ENCODE measurements at regions of chr2 and their contacts with region 1.

Region 1: DNA sequence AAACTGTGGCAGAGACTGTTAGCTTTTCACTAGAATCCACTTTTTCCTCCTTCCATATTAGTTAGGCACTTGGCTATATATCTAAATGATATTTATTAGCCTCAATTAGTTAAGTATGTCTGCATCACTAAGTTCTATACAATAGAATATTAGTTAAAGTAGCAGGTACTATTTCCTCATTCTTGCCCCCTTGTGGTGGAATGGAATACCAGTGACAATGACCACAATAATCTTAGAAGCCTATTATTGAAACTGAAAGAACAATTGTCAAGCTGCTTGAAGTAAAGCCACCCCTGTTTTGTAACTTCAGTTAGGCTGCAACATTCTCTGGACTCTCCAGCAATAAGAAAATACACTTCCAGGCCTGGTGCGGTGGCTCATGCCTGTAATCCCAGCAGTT is 476.3 kb upstream of the VWC2L start:
- H3K4me3 Mint-ChIP-seq: no peak overlapping the region
- H3K27ac Mint-ChIP-seq: no peak overlapping the region
- H3K4me1 Mint-ChIP-seq: no peaks in the 10 kb centered on the region
- H3K27me3 Mint-ChIP-seq: no peaks in the 10 kb centered on the region

Region 2: DNA sequence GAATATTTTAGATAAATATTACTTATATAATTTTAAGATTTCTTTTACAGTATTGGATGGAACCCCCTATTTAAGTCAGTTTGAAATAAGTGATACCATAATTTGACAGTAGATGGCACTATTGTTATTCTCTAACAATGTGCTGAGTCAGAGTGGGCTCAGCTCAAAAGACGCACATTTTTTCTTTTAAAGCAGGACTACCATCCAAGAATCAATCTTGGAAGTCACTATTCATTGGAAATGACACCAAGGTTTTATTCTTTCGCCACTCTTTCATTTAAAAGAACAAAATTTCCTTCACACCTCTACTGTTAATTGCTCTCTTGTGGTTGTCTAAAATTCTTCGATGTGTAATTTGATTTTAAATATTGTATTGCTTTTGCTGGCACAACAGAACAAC is 682.9 kb before region 1 on chr2:
- intact Hi-C with region 1: loop called (anchors 5 kb)
- H3K4me3 Mint-ChIP-seq: no peak overlapping the region
- H3K27ac Mint-ChIP-seq: no peak overlapping the region
- H3K4me1 Mint-ChIP-seq: no peaks in the 10 kb centered on the region
- H3K27me3 Mint-ChIP-seq: peaks cover 2% of the 10 kb centered on the region

Region 3: GRCh38 chr2:213723041-213723560 is 211.5 kb before region 1 on chr2:
- intact Hi-C with region 1: no loop called
- H3K4me3 Mint-ChIP-seq: no peak overlapping the region
- H3K27ac Mint-ChIP-seq: no peak overlapping the region
- H3K4me1 Mint-ChIP-seq: no peaks in the 10 kb centered on the region
- H3K27me3 Mint-ChIP-seq: no peaks in the 10 kb centered on the region

Region 4: GRCh38 chr2:213806125-213806726 is 128.3 kb before region 1 on chr2:
- intact Hi-C with region 1: no loop called
- H3K4me3 Mint-ChIP-seq: no peak overlapping the region
- H3K27ac Mint-ChIP-seq: no peak overlapping the region
- H3K4me1 Mint-ChIP-seq: no peaks in the 10 kb centered on the region
- H3K27me3 Mint-ChIP-seq: no peaks in the 10 kb centered on the region

Region 5: DNA sequence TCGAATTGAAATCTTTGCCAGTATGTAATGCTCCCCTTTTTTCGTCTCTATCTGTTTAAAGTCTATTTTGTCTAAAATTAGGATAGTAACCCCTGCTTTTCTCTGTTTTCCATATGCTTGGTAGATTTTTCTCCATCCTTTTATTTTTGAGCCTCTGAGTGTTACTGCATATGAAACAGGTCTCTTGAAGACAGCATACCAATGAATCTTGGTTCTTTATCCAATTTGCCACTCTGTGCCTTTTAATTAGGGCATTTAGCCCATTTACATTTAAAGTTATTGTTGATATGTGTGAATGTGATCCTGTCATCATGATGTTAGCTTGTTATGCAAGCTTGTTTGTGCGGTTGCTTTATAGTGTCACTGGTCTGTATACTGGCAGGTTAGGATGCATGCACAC is 14.5 kb before region 1 on chr2:
- intact Hi-C with region 1: no loop called
- H3K4me3 Mint-ChIP-seq: no peak overlapping the region
- H3K27ac Mint-ChIP-seq: no peak overlapping the region
- H3K4me1 Mint-ChIP-seq: no peaks in the 10 kb centered on the region
- H3K27me3 Mint-ChIP-seq: no peaks in the 10 kb centered on the region

Region 6: GRCh38 chr2:214127571-214127970 is 193.0 kb after region 1 on chr2:
- intact Hi-C with region 1: no loop called
- H3K4me3 Mint-ChIP-seq: no peak overlapping the region
- H3K27ac Mint-ChIP-seq: no peak overlapping the region
- H3K4me1 Mint-ChIP-seq: no peaks in the 10 kb centered on the region
- H3K27me3 Mint-ChIP-seq: no peaks in the 10 kb centered on the region

Measured in dendritic cell treated with granulocyte-macrophage colony-stimulating factor and Interleukin-4, amounts not matched to agents 40 ng/mL and 50 ng/mL, for 4 days (primary cell).